Panc1 (cell line): ENCODE measurements at regions of chr20 and their contacts with region 1.

Region 1: GRCh38 chr20:18738888-18739287 is 74.7 kb upstream of the SCP2D1 start:
- DNase-seq: no peak
- ATAC-seq: no peak
- H3K4me3 ChIP-seq: no peak overlapping the region
- H3K27ac ChIP-seq: no peak overlapping the region
- H3K4me1 ChIP-seq: no peaks in the 10 kb centered on the region
- H3K27me3 ChIP-seq: no peaks in the 10 kb centered on the region
- CTCF ChIP-seq: no peak

Region 2: DNA sequence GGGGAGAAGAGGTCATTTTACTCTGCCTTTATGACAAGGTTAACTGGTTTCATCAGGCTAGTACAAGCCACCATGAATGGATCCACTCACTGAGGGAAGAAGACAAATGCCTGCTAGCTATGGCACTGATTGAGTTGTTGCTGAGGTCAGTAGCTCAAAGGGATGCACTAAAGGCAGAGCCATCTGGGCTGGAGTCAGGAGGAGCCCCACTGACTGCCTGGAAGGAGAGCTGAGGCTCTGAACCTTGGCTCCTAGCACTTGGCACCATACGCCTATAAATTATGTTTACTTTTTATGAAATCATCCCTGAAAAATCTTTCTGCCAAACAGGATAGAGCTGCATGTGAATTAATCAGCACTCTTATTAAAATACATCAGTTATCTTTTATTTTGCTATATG is 46.4 kb before region 1 on chr20:
- CTCF ChIA-PET with region 1: no interaction called
- POLR2A ChIA-PET with region 1: no interaction called
- in situ Hi-C with region 1: no loop called
- intact Hi-C with region 1: no loop called
- DNase-seq: no peak
- ATAC-seq: no peak
- H3K4me3 ChIP-seq: no peak overlapping the region
- H3K27ac ChIP-seq: no peak overlapping the region
- H3K4me1 ChIP-seq: peaks cover 3% of the 10 kb centered on the region; the same call in 1 of the 2 replicates
- H3K27me3 ChIP-seq: no peaks in the 10 kb centered on the region
- CTCF ChIP-seq: no peak

Region 3: GRCh38 chr20:20202768-20203167 is 1463.9 kb after region 1 on chr20:
- CTCF ChIA-PET with region 1: no interaction called
- POLR2A ChIA-PET with region 1: interaction called, 13 read pairs
- in situ Hi-C with region 1: no loop called
- intact Hi-C with region 1: no loop called
- DNase-seq: no peak
- ATAC-seq: no peak
- H3K4me3 ChIP-seq: no peak overlapping the region
- H3K27ac ChIP-seq: no peak overlapping the region
- H3K4me1 ChIP-seq: no peaks in the 10 kb centered on the region
- H3K27me3 ChIP-seq: peaks cover 3% of the 10 kb centered on the region
- CTCF ChIP-seq: no peak